ENCODE measurements at regions of chr7 and their contacts with region 1.

Region 1: DNA sequence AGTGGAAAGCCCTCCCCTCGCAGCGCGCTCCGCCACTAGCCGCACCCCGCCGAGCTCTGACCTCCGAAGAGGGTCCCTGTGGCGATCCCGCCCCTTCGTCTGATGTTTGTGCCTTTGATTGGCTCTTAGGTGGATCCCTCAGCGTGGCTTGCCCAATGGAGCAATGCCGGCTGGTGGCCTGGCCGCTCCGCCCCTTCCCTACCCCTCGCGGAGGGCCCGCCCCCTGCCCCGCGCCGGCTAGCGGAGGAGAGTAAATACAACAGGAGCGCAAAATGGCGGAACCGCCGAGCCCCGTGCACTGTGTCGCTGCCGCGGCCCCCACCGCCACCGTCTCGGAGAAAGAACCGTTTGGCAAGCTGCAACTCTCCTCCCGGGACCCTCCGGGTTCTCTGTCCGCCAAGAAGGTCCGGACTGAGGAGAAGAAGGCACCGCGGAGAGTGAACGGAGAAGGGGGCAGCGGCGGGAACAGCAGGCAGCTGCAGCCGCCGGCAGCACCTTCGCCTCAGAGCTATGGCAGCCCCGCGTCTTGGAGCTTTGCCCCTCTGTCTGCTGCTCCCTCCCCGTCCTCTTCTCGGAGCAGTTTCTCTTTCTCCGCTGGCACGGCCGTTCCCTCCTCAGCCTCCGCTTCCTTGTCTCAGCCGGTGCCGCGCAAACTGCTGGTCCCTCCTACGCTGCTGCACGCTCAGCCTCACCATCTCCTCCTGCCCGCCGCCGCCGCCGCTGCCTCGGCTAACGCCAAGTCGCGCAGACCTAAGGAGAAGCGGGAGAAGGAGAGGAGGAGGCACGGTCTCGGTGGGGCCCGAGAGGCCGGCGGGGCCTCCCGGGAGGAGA is at the start of gene RSBN1L:
- DNase-seq: peak; percentile 97
- ATAC-seq: peak; percentile 94
- H3K4me3 ChIP-seq: peak within 1 kb of the TSS; percentile 72 to 100 (median 84)
- H3K4me3 Mint-ChIP-seq: peak within 1 kb of the TSS; percentile 98
- H3K27ac ChIP-seq: peak within 1 kb of the TSS; percentile 89 to 90
- H3K27ac Mint-ChIP-seq: peak within 1 kb of the TSS; percentile 97
- H3K4me1 ChIP-seq: peaks cover 20 to 35% of the 10 kb centered on the region in 2 donors
- H3K4me1 Mint-ChIP-seq: peaks cover 54% of the 10 kb centered on the region
- H3K27me3 ChIP-seq: no peaks in the 10 kb centered on the region
- H3K27me3 Mint-ChIP-seq: no peaks in the 10 kb centered on the region
- CTCF ChIP-seq: peak; percentile 61
- total RNA-seq, gene RSBN1L: 47.0 and 55.0 TPM in 2 replicates

Region 2: GRCh38 chr7:77536413-77537135 is 159.8 kb before region 1 on chr7:
- CTCF ChIA-PET with region 1: no interaction called
- POLR2A ChIA-PET with region 1: no interaction called
- intact Hi-C with region 1: loop called (anchors 1 kb)
- DNase-seq: peak; percentile 96
- ATAC-seq: peak; percentile 89
- H3K4me3 ChIP-seq: peak overlapping the region; percentile 88 to 96 (median 95)
- H3K4me3 Mint-ChIP-seq: peak overlapping the region; percentile 99
- H3K27ac ChIP-seq: peak overlapping the region; percentile 75 to 81
- H3K27ac Mint-ChIP-seq: peak overlapping the region; percentile 98
- H3K4me1 ChIP-seq: peaks cover 8 to 28% of the 10 kb centered on the region in 2 donors
- H3K4me1 Mint-ChIP-seq: peaks cover 27% of the 10 kb centered on the region
- H3K27me3 ChIP-seq: no peaks in the 10 kb centered on the region
- H3K27me3 Mint-ChIP-seq: no peaks in the 10 kb centered on the region
- CTCF ChIP-seq: no peak

Region 3: GRCh38 chr7:77627309-77627676 is 69.1 kb before region 1 on chr7:
- CTCF ChIA-PET with region 1: no interaction called
- POLR2A ChIA-PET with region 1: no interaction called
- intact Hi-C with region 1: no loop called
- DNase-seq: no peak
- ATAC-seq: no peak
- H3K4me3 ChIP-seq: no peak overlapping the region
- H3K4me3 Mint-ChIP-seq: no peak overlapping the region
- H3K27ac ChIP-seq: no peak overlapping the region
- H3K27ac Mint-ChIP-seq: no peak overlapping the region
- H3K4me1 ChIP-seq: no peaks in the 10 kb centered on the region
- H3K4me1 Mint-ChIP-seq: no peaks in the 10 kb centered on the region
- H3K27me3 ChIP-seq: no peaks in the 10 kb centered on the region
- H3K27me3 Mint-ChIP-seq: no peaks in the 10 kb centered on the region
- CTCF ChIP-seq: no peak